ENCODE measurements at regions of chr11 and their contacts with region 1.

Region 1: GRCh38 chr11:61392981-61393595 is 701 bp downstream of the TMEM216 start:
- DNase-seq: peak; percentile 55 to 68 (median 64)
- H3K4me3 ChIP-seq: peak overlapping the region; percentile 74 to 95 (median 81)
- H3K27ac ChIP-seq: peak overlapping the region; percentile 40 to 78
- H3K4me1 ChIP-seq: peaks cover 4 to 24% (median 21%) of the 10 kb centered on the region in 4 experiments
- H3K27me3 ChIP-seq: no peaks in the 10 kb centered on the region

Region 2: GRCh38 chr11:61411589-61411988 is 18.5 kb after region 1 on chr11:
- CTCF ChIA-PET with region 1: interaction called, 12 read pairs
- POLR2A ChIA-PET with region 1: no interaction called
- DNase-seq: no peak
- H3K4me3 ChIP-seq: no peak overlapping the region
- H3K27ac ChIP-seq: peak overlapping the region in 1 of 2 experiments; percentile 11
- H3K4me1 ChIP-seq: peaks cover 0 to 2% (median 0%) of the 10 kb centered on the region in 4 experiments
- H3K27me3 ChIP-seq: no peaks in the 10 kb centered on the region

Region 3: DNA sequence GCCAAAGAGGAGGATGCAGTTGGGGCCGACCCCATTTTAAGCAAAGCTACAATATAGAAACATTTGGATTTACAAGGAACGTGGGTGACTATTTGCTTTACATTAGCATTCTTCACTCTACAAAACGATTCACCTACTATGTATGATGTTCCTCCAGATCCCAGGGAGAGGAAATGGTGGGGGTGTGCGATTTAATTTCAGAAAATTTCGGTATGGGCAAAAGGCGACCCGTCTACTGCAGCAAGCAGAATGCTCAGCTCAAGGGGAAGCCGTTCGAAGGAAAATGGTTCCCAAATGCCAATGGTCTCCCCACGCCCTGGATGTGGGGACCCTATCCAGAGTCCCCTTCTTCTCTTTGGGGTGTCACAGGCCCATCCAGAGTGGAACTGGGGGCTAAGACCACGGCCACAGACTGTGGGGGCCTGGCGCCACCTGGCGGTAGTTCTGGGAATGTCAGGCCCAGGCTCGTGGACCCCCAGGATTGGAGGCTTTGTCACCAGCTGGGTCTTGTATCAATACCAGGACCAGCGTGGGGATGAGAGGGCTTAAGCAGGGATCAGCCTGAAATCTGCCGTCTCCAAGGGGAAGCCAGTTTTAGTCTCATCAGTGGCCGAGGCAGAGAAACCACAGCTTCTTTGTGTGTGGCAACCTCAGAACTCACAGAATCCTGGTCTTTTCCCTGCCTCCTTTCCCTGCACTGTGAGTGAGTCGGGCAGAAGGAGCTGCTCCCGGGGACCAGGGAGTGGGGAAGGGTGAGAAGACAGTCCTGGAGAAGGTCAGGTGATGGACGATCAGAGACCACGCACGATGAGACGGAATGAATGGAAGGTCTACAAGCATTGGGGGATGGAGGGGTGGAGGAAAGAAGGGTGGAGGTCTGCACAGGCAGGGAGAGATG is 123.8 kb after region 1 on chr11:
- CTCF ChIA-PET with region 1: no interaction called
- POLR2A ChIA-PET with region 1: no interaction called
- DNase-seq: peak; percentile 39 to 61 (median 60)
- H3K4me3 ChIP-seq: peak overlapping the region in 4 of 7 experiments; percentile 29 to 71 (median 42)
- H3K27ac ChIP-seq: no peak overlapping the region
- H3K4me1 ChIP-seq: peaks cover 0 to 12% (median 9%) of the 10 kb centered on the region in 4 experiments
- H3K27me3 ChIP-seq: peaks cover 0 to 8% (median 6%) of the 10 kb centered on the region in 5 experiments

Region 4: GRCh38 chr11:61627567-61628445 is 234.7 kb after region 1 on chr11:
- CTCF ChIA-PET with region 1: no interaction called
- POLR2A ChIA-PET with region 1: no interaction called
- DNase-seq: peak; percentile 25 to 52 (median 33)
- H3K4me3 ChIP-seq: no peak overlapping the region
- H3K27ac ChIP-seq: no peak overlapping the region
- H3K4me1 ChIP-seq: peaks cover 0 to 4% (median 0%) of the 10 kb centered on the region in 4 experiments
- H3K27me3 ChIP-seq: peaks cover 0 to 11% (median 3%) of the 10 kb centered on the region in 5 experiments

Measured in common myeloid progenitor, CD34-positive (primary cell).